Right cardiac atrium (tissue), 5 donors: ENCODE measurements at regions of chr1 and their contacts with region 1.

Region 1: GRCh38 chr1:26874896-26875295 is 11.9 kb downstream of the SFN start:
- DNase-seq: no peak
- ATAC-seq: no peak
- H3K4me3 ChIP-seq: no peak overlapping the region
- H3K27ac ChIP-seq: no peak overlapping the region
- H3K4me1 ChIP-seq: no peaks in the 10 kb centered on the region
- H3K27me3 ChIP-seq: no peaks in the 10 kb centered on the region

Region 2: GRCh38 chr1:26602378-26602959 is 272.4 kb before region 1 on chr1:
- intact Hi-C with region 1: loop called (anchors 5 to 10 kb)
- DNase-seq: no peak
- ATAC-seq: peak in 1 of 2 donors; percentile 23
- H3K4me3 ChIP-seq: no peak overlapping the region
- H3K27ac ChIP-seq: no peak overlapping the region
- H3K4me1 ChIP-seq: no peaks in the 10 kb centered on the region
- H3K27me3 ChIP-seq: no peaks in the 10 kb centered on the region

Region 3: DNA sequence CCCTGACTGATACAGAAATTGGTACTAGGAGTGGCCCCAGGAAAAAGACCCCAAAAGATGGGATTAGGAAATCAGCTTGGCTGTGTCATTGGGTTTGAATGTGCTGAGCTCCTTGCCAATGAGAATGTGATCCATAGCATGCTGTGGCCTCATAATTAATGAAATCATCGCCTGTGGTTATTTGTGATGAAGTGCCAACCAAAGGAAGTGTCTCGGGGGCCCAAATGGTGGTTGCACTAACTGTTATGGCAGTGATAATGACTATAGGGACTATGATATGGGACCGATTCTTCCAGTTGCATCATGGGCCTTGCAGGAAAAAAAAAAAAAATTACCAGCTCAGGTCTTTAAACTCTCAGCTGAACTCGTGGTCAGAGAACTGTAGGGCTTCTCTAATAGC is 63.8 kb before region 1 on chr1:
- intact Hi-C with region 1: loop called in 3 of 4 experiments (anchors 5 to 10 kb)
- DNase-seq: no peak
- ATAC-seq: no peak
- H3K4me3 ChIP-seq: no peak overlapping the region
- H3K27ac ChIP-seq: no peak overlapping the region
- H3K4me1 ChIP-seq: peaks cover under 1% of the 10 kb centered on the region
- H3K27me3 ChIP-seq: no peaks in the 10 kb centered on the region

Region 4: DNA sequence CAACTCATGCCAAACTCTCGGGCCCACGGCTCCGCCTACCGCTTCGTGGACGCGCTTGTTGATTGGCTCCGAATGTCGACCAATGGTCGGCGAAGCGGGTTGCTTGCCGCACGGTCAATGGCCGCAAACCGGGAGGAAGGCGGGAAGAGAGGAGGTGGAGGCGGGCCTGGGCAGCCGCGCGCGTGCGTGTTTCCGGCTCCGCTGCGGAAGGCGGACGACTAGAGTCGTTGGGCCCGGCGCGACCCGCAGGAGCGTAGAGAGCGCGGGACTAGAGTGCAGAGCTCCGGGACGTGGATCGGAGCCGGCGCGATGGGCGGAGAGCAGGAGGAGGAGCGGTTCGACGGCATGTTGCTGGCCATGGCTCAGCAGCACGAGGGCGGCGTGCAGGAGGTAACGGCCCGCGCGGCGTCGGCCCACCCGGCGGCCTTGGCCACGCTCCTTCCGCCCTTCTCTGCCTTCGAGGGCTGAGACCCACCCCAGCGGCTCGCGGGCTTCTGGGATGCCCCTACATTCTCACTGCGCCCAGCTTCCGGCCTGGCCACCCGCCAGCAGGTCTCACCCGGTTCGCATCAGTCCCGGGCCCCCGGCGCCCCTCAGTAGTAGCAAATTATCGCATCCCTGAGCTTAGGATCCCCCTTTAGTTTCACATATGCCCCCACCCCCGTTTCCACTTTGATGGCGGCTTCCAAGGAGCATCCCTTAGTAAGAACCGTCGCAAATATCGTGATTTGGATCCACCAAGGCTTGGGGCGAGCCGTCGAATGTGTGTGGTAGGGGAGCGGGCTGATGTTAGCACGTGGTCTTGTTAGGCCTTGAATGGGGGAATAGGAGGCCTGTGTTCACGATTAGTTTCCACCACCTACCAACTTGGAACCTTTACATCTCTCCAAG is 46.9 kb after region 1 on chr1 and contains the start of gene NUDC:
- intact Hi-C with region 1: no loop called
- DNase-seq: peak; percentile 97 to 99 (median 98)
- ATAC-seq: peak; percentile 98 to 99
- H3K4me3 ChIP-seq: peak within 1 kb of the TSS; percentile 40
- H3K27ac ChIP-seq: peak within 1 kb of the TSS; percentile 82
- H3K4me1 ChIP-seq: peaks cover 11% of the 10 kb centered on the region
- H3K27me3 ChIP-seq: no peaks in the 10 kb centered on the region
- total RNA-seq, gene NUDC: 71.7 to 89.1 (median 76.4) TPM